ENCODE measurements at regions of chr5 and their contacts with region 1.

Region 1: DNA sequence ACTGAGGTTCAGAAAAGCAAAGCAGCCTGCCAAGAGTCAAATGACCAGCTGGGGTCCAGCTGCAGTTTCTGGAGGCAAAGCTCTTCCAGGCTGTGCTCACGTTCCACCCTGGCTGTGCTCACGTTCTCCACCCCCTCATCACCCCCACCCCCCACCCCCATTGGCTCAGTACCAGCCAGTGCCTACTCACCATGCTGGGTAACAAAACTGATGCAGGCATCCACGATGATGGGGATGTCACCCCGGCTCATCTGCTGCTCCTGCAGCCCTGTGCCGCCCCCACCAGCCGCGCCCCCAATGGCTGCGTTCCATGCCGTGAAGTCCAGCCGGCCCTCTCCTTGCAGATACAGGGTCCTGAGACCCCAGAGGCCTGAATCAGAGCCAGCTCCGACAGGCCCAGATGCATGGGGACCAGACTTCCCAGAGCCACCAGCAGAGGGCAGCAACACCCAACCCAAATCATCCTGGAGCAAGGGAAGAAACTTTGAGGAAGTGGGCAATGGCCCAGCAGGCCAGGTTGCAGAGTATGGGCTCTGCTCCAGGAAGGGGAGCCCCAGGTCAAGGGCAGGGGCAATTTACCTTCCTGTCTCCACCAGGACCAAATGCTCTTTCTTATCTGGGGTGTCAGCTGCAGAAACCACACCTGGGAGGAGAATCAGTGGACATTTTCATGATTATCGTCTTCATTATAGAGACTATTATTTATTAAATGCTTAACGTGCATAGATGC is 13.7 kb upstream of the FCHSD1 start:
- DNase-seq: no peak
- H3K4me3 ChIP-seq: no peak overlapping the region
- H3K27me3 ChIP-seq: no peaks in the 10 kb centered on the region
- CTCF ChIP-seq: peak; percentile 96

Region 2: DNA sequence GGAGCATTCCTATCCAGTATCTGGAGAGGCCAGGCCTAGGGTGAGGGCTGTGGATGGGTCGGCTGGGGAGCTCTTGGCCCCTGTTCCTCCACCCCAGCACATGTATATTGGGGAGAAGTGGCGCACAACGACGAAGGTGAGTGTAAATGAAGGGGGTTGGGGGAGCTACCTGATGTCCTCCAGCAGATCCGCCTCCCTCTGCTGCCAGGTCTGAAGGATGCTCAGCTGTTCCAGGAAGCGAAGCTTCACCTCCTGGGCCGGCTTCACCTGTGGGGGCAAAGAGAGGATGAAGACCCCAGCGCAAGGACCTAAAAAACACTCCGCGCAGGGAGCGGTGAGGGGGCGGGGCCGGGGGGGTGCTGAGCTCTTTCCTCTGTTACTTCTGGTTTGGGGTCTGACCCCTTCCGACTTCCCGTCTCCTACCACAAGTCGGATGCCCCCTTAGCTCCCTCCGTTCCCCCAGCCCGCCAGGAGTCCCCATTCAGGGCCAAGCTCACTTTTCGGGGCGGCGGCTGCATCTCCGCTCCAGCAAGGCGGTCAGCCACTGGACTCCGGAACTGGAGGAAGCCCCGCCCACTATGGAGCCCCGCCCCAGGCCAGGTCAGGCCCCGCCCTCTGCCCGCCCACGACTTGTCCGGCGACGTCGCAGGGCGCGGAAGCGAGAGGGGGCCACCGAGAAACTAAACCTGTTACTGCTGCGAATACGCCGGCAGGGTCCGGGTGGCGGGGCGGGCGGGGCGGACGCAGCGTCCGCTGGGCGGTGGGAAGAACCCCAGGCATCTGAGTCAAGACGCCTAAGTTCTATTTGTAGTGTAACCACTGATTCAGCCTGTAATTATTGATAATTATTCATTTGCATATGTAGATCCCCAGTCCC is 13.8 kb before region 1 on chr5 and contains the start of gene FCHSD1:
- CTCF ChIA-PET with region 1: interaction called, 14 read pairs
- POLR2A ChIA-PET with region 1: no interaction called
- DNase-seq: no peak
- H3K4me3 ChIP-seq: peak within 1 kb of the TSS; percentile 79
- H3K27me3 ChIP-seq: no peaks in the 10 kb centered on the region
- CTCF ChIP-seq: peak; percentile 32; the same call in 1 of the 2 replicates
- polyA plus RNA-seq, gene FCHSD1: 35.8 and 45.8 TPM in 2 replicates